ENCODE measurements at regions of chr10 and their contacts with region 1.

Region 1: GRCh38 chr10:62038609-62039190 is 137.2 kb downstream of the ARID5B start:
- DNase-seq: peak; percentile 71
- H3K4me3 ChIP-seq: no peak overlapping the region
- H3K27ac ChIP-seq: peak overlapping the region; percentile 93
- H3K4me1 ChIP-seq: peaks cover 43% of the 10 kb centered on the region
- H3K27me3 ChIP-seq: no peaks in the 10 kb centered on the region
- CTCF ChIP-seq: peak; percentile 85 to 86

Region 2: GRCh38 chr10:61750929-61751471 is 287.7 kb before region 1 on chr10:
- CTCF ChIA-PET with region 1: no interaction called
- dilution Hi-C with region 1: no loop called
- in situ Hi-C with region 1: no loop called
- intact Hi-C with region 1: loop called (anchors 5 kb)
- DNase-seq: peak; percentile 59
- H3K4me3 ChIP-seq: no peak overlapping the region
- H3K27ac ChIP-seq: no peak overlapping the region
- H3K4me1 ChIP-seq: peaks cover 29% of the 10 kb centered on the region
- H3K27me3 ChIP-seq: no peaks in the 10 kb centered on the region
- CTCF ChIP-seq: peak; percentile 90 to 95

Region 3: GRCh38 chr10:61981402-61981841 is 57.3 kb before region 1 on chr10:
- CTCF ChIA-PET with region 1: no interaction called
- dilution Hi-C with region 1: no loop called
- in situ Hi-C with region 1: no loop called
- intact Hi-C with region 1: no loop called
- DNase-seq: peak; percentile 30
- H3K4me3 ChIP-seq: no peak overlapping the region
- H3K27ac ChIP-seq: no peak overlapping the region
- H3K4me1 ChIP-seq: no peaks in the 10 kb centered on the region
- H3K27me3 ChIP-seq: no peaks in the 10 kb centered on the region
- CTCF ChIP-seq: no peak

Region 4: DNA sequence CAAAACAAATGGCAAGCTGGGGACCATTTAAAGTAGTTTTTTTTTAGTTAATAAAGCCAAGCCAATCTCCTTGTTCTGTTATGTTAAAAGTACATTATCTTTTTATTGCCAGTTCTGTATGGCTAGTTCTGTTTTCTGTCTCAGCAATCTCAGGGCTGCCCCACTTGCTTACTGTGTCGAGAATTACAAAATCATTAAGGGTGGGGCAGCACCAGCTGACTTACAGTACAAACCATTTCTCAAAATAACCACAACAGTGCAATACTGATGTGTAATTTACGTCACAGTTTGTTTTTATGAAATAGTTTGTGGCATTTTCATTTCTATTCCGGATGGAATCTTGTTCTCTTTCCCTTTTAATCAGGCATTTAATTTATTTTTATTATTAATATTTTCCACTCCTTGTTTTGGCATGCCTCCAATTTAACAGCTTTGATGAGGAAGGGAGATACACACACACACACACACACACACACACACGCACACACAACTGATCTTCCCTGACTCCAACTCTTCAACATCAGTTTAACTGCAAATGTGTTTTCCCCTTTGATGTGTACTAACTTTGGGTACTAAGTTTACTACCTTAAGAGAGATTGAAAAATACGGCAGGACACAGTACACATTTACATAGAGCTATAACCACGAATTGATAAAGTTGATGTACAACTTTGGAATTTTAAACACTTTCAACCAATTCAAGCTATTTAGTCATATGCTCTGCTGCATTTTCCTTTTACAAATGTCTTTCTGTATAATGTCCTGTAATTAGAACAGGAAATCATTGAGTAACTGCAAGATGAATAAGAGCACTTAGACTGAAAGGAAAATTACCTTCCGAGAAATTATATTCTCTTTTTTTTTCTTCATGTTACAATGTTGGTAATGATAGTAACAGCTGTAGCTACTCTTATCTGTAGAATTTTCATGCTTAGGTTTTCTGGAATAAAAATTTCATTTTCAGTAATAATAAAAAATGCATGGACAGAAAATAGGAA is 45.7 kb before region 1 on chr10:
- CTCF ChIA-PET with region 1: interaction called, 3 read pairs
- dilution Hi-C with region 1: no loop called
- in situ Hi-C with region 1: no loop called
- intact Hi-C with region 1: loop called (anchors 1 kb)
- DNase-seq: peak; percentile 90
- H3K4me3 ChIP-seq: peak overlapping the region; percentile 3 to 32 (median 24)
- H3K27ac ChIP-seq: peak overlapping the region; percentile 88
- H3K4me1 ChIP-seq: peaks cover 15% of the 10 kb centered on the region
- H3K27me3 ChIP-seq: no peaks in the 10 kb centered on the region
- CTCF ChIP-seq: no peak

Region 5: DNA sequence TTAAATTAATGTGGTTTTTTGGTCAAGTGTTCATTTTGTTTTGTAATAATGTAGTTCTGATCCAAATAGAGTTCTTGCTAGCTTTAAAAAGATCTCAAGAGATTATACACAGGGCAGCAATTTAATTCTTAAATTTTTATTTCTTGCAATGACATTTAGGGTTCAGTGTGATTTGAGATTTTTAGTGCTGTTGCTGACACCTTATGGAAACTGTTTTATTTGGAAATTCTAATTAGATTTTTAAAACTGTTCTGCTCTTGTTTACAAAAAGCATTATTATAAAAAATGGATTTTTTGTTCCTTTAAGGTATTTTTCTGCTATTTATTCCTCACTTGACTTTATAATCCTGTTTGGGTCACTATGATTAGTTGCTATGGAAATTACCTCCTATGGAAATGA is 157.8 kb after region 1 on chr10:
- CTCF ChIA-PET with region 1: no interaction called
- dilution Hi-C with region 1: no loop called
- in situ Hi-C with region 1: no loop called
- intact Hi-C with region 1: loop called (anchors 1 kb)
- DNase-seq: no peak
- H3K4me3 ChIP-seq: no peak overlapping the region
- H3K27ac ChIP-seq: no peak overlapping the region
- H3K4me1 ChIP-seq: no peaks in the 10 kb centered on the region
- H3K27me3 ChIP-seq: no peaks in the 10 kb centered on the region
- CTCF ChIP-seq: no peak

Region 6: GRCh38 chr10:62384057-62384446 is 345.4 kb after region 1 on chr10:
- CTCF ChIA-PET with region 1: no interaction called
- dilution Hi-C with region 1: no loop called
- in situ Hi-C with region 1: loop called (anchors 25 kb)
- intact Hi-C with region 1: loop called (anchors 10 kb)
- DNase-seq: peak; percentile 99
- H3K4me3 ChIP-seq: peak overlapping the region in 1 of 3 experiments; percentile 3
- H3K27ac ChIP-seq: peak overlapping the region; percentile 100
- H3K4me1 ChIP-seq: peaks cover 85% of the 10 kb centered on the region
- H3K27me3 ChIP-seq: no peaks in the 10 kb centered on the region
- CTCF ChIP-seq: no peak